ENCODE measurements at regions of chr2 and their contacts with region 1.

Region 1: DNA sequence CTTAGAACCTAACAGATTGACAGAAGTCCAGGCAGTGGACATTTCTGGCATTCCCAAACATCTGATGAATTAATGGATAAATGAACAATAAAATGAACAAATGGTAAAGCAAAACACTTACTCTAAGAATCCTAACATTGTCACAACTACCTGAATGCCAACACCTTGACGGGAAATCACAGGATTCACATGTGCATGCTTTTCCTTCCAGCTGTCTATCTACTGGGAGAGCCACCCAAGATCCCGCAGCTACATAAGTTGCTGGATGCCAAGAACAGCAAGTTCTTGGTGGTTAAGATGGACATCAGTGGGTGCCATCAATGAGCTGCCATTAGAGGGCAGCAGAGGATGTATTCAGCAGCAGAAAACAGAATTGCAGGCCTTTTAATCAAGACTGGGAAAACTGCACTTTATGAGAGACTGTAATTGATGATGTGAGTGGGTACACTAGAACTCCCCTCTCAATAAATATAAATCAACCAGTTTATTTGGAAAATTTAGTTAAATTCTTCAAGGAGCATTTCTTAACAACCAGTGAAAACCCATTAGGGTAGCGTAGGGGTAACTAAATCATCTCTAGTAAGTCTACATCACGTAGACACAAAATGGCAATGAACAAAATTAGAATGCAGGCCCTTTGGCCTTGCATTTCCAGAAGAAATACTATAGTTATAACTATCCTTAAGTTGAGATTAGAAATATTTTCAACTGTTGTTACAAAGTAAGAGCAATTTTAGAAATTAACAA is 45.6 kb downstream of the SESTD1 start:
- DNase-seq: peak; percentile 70 to 71
- H3K4me3 ChIP-seq: no peak overlapping the region
- H3K4me3 Mint-ChIP-seq: no peak overlapping the region
- H3K27ac Mint-ChIP-seq: no peak overlapping the region
- H3K4me1 ChIP-seq: no peaks in the 10 kb centered on the region
- H3K4me1 Mint-ChIP-seq: no peaks in the 10 kb centered on the region
- H3K27me3 ChIP-seq: no peaks in the 10 kb centered on the region
- H3K27me3 Mint-ChIP-seq: no peaks in the 10 kb centered on the region
- CTCF ChIP-seq: peak; percentile 82 to 90

Region 2: GRCh38 chr2:179193759-179194394 is 25.1 kb before region 1 on chr2:
- CTCF ChIA-PET with region 1: interaction called, 3 read pairs
- POLR2A ChIA-PET with region 1: no interaction called
- intact Hi-C with region 1: loop called (anchors 2 kb)
- DNase-seq: peak in 1 of 2 experiments; percentile 23
- H3K4me3 ChIP-seq: no peak overlapping the region
- H3K4me3 Mint-ChIP-seq: no peak overlapping the region
- H3K27ac Mint-ChIP-seq: peak overlapping the region; percentile 5
- H3K4me1 ChIP-seq: peaks cover 13% of the 10 kb centered on the region
- H3K4me1 Mint-ChIP-seq: peaks cover 7% of the 10 kb centered on the region
- H3K27me3 ChIP-seq: no peaks in the 10 kb centered on the region
- H3K27me3 Mint-ChIP-seq: no peaks in the 10 kb centered on the region
- CTCF ChIP-seq: peak in 1 of 2 experiments; percentile 1

Region 3: GRCh38 chr2:179340668-179341067 is 121.6 kb after region 1 on chr2:
- CTCF ChIA-PET with region 1: interaction called, 4 read pairs
- POLR2A ChIA-PET with region 1: no interaction called
- intact Hi-C with region 1: loop called (anchors 1 kb)
- DNase-seq: peak in 1 of 2 experiments; percentile 30
- H3K4me3 ChIP-seq: no peak overlapping the region
- H3K4me3 Mint-ChIP-seq: no peak overlapping the region
- H3K27ac Mint-ChIP-seq: no peak overlapping the region
- H3K4me1 ChIP-seq: peaks cover 13% of the 10 kb centered on the region
- H3K4me1 Mint-ChIP-seq: peaks cover 14% of the 10 kb centered on the region
- H3K27me3 ChIP-seq: no peaks in the 10 kb centered on the region
- H3K27me3 Mint-ChIP-seq: no peaks in the 10 kb centered on the region
- CTCF ChIP-seq: peak; percentile 34 to 48

Region 4: GRCh38 chr2:179422037-179422643 is 203.1 kb after region 1 on chr2:
- CTCF ChIA-PET with region 1: no interaction called
- POLR2A ChIA-PET with region 1: no interaction called
- intact Hi-C with region 1: loop called (anchors 1 kb)
- DNase-seq: peak; percentile 72 to 80
- H3K4me3 ChIP-seq: no peak overlapping the region
- H3K4me3 Mint-ChIP-seq: no peak overlapping the region
- H3K27ac Mint-ChIP-seq: no peak overlapping the region
- H3K4me1 ChIP-seq: 0 out of 2 replicates have a peak, but pooled peaks cover 3% of the 10 kb centered on the region
- H3K4me1 Mint-ChIP-seq: no peaks in the 10 kb centered on the region
- H3K27me3 ChIP-seq: no peaks in the 10 kb centered on the region
- H3K27me3 Mint-ChIP-seq: no peaks in the 10 kb centered on the region
- CTCF ChIP-seq: peak; percentile 60 to 93

Region 5: DNA sequence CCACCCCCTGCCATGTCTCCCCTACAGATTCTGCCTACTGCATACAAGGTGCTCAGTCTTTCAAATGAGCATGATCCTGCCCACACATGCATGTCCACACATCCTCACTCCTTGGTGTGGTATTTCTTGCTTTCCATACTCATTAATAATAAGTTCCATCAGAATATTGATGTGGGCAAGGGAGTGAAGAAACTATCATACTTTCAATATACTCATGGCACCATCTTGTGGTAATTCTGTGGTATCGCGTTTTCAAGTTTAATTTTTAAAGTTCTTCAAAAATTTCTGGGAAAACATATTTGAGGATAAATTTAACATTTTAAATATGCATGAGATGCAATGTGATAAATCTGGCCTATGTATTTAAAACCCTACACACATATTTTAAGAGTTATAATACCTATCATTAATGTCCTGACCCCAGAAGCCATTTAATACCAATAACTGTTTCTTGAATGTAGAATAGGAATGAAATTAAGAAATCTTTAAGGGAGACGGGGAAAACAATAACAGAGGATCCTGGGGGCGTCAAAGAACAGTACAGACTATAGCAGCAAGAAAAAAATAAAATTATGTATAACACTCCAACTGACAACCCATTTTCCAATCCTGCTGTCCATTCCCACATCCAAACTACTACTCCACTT is 532.3 kb after region 1 on chr2:
- CTCF ChIA-PET with region 1: no interaction called
- POLR2A ChIA-PET with region 1: no interaction called
- intact Hi-C with region 1: loop called (anchors 1 kb)
- DNase-seq: peak in 1 of 2 experiments; percentile 4
- H3K4me3 ChIP-seq: no peak overlapping the region
- H3K4me3 Mint-ChIP-seq: no peak overlapping the region
- H3K27ac Mint-ChIP-seq: no peak overlapping the region
- H3K4me1 ChIP-seq: no peaks in the 10 kb centered on the region
- H3K4me1 Mint-ChIP-seq: peaks cover 4% of the 10 kb centered on the region
- H3K27me3 ChIP-seq: no peaks in the 10 kb centered on the region
- H3K27me3 Mint-ChIP-seq: peaks cover 3% of the 10 kb centered on the region
- CTCF ChIP-seq: peak; percentile 52 to 72

Measured in Caco-2 (cell line).